Activated naive CD4-positive, alpha-beta T cell treated with anti-CD3 and anti-CD28 coated beads for 36 hours (primary cell): ENCODE measurements at regions of chr9 and their contacts with region 1.

Region 1: DNA sequence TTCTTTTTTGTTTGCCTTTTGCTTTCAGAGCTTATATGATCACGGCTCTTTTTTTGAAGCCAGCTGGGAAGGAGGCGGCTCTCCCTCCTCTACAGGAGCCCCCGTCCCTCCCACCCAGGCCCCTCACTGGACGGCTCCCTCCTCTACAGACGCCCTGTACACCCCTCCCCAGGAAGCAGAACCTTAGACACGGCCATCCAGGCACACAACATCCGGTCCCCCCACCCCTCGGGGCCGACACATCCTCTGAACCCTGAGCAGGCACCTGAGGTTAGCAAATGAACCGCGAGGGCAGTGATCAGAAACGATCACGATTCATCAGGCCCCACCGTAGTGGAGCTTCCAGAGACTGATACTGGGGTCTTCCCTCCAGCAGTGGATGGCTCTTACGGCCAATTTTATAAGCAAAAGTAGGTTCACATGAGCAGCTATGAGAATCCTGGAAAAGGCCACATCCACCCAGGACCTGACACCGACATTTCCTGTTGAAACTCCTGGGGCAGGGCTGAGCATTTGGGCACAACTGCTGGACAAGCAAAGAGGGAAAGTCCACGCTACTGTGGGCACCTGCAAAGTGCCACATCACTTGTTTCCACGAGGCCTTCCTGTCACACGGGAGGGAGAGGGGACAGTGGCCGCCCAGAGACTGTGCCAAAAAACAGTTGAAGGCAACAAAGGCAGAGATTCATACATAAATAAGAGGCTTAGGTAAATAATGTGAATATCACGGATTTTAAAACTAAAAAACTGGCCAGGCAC is 78.9 kb downstream of the SEMA4D start:
- DNase-seq: peak; percentile 82
- H3K4me3 Mint-ChIP-seq: peak overlapping the region; percentile 53
- H3K27ac Mint-ChIP-seq: peak overlapping the region; percentile 98
- H3K4me1 Mint-ChIP-seq: peaks cover 89% of the 10 kb centered on the region
- H3K27me3 Mint-ChIP-seq: no peaks in the 10 kb centered on the region

Region 2: DNA sequence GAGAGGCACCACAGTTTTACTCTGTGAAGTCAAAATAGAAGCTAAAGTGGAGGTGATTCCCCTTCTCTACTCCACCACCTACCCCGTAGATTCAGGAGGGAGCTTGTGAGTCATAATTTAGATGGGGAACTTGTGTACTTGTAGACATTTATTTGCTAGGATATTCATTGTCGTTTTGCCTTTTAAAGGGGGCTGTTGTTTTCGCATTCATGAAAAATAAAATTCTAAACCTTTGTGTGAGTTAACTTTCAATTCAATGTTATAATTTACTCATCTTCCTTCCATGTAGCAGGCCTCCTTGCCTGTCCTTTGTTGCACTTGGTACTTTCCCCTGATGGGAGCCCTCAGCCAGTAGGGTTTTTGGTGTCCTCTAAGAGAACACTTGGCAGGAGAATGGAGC is 78.7 kb before region 1 on chr9:
- CTCF ChIA-PET with region 1: no interaction called
- intact Hi-C with region 1: loop called (anchors 1 kb)
- DNase-seq: peak; percentile 31
- H3K4me3 Mint-ChIP-seq: no peak overlapping the region
- H3K27ac Mint-ChIP-seq: peak overlapping the region; percentile 67
- H3K4me1 Mint-ChIP-seq: peaks cover 48% of the 10 kb centered on the region
- H3K27me3 Mint-ChIP-seq: no peaks in the 10 kb centered on the region

Region 3: DNA sequence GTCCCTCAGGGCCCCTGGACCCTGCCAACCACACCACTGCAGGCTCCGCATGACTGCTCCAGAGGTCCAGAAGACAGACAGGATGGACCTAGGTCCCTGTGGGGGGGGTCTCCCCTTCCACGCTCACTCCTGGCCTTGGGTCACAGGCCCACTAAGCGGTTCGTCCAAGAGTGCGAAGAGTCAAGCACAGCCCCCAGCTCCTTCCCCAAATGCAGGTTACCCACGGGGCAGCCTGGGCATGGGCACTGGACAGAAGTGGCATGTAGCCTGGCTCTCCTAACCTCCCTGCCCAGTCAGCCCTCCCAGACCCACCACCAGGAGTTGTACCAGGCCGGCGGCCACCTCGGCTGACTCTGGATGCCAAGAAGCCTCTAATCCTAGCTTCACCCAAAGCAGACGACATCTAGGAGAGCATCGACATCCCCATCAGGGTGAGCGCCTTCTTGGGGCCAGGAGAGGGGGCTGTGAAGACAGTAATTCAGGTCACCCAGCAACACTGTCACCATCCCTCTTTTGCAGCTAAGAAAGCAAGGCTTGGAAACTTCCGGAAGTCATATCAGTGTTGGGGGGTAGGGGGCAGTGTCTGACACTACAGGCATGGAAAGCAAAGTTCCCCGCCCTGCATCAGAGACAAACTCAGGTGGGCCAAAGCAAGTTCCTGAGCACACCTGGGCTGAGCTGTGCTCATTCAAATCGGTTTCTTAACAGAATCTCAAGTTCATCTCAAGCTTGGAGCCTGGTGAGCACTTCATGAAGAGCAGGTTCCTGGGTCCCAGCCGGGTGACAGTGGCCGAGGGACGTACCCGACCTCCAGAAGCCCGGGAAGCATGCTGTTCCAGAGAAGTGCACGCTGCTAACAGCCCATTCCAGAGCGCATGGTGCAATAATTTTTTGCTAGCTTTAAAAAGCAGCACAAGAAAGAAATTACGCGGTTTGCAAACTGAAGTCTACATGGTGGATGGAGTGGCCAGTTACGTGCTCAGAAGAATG is 10.1 kb after region 1 on chr9:
- CTCF ChIA-PET with region 1: interaction called, 17 read pairs
- intact Hi-C with region 1: loop called (anchors 1 kb)
- DNase-seq: peak; percentile 79
- H3K4me3 Mint-ChIP-seq: no peak overlapping the region
- H3K27ac Mint-ChIP-seq: peak overlapping the region; percentile 98
- H3K4me1 Mint-ChIP-seq: peaks cover 90% of the 10 kb centered on the region
- H3K27me3 Mint-ChIP-seq: no peaks in the 10 kb centered on the region

Region 4: GRCh38 chr9:89455356-89455824 is 36.3 kb after region 1 on chr9:
- CTCF ChIA-PET with region 1: no interaction called
- intact Hi-C with region 1: loop called (anchors 2 kb)
- DNase-seq: peak; percentile 63
- H3K4me3 Mint-ChIP-seq: peak overlapping the region; percentile 1
- H3K27ac Mint-ChIP-seq: peak overlapping the region; percentile 79
- H3K4me1 Mint-ChIP-seq: peaks cover 91% of the 10 kb centered on the region
- H3K27me3 Mint-ChIP-seq: no peaks in the 10 kb centered on the region

Region 5: GRCh38 chr9:89497978-89498851 is 79.2 kb after region 1 on chr9 and contains the start of gene SEMA4D:
- CTCF ChIA-PET with region 1: interaction called, 4 read pairs
- intact Hi-C with region 1: loop called (anchors 2 kb)
- DNase-seq: peak; percentile 84
- H3K4me3 Mint-ChIP-seq: peak within 1 kb of the TSS; percentile 89
- H3K27ac Mint-ChIP-seq: peak within 1 kb of the TSS; percentile 93
- H3K4me1 Mint-ChIP-seq: peaks cover 73% of the 10 kb centered on the region
- H3K27me3 Mint-ChIP-seq: no peaks in the 10 kb centered on the region
- total RNA-seq, gene SEMA4D: 156 to 160 TPM

Region 6: GRCh38 chr9:89536145-89536574 is 117.1 kb after region 1 on chr9:
- CTCF ChIA-PET with region 1: interaction called, 3 read pairs
- intact Hi-C with region 1: loop called (anchors 1 kb)
- DNase-seq: peak; percentile 55
- H3K4me3 Mint-ChIP-seq: peak overlapping the region; percentile 44
- H3K27ac Mint-ChIP-seq: peak overlapping the region; percentile 86
- H3K4me1 Mint-ChIP-seq: peaks cover 88% of the 10 kb centered on the region
- H3K27me3 Mint-ChIP-seq: no peaks in the 10 kb centered on the region

Region 7: GRCh38 chr9:89701221-89701798 is 282.2 kb after region 1 on chr9:
- CTCF ChIA-PET with region 1: no interaction called
- intact Hi-C with region 1: loop called (anchors 5 kb)
- DNase-seq: peak; percentile 93
- H3K4me3 Mint-ChIP-seq: peak overlapping the region; percentile 50
- H3K27ac Mint-ChIP-seq: peak overlapping the region; percentile 85
- H3K4me1 Mint-ChIP-seq: peaks cover 30% of the 10 kb centered on the region
- H3K27me3 Mint-ChIP-seq: no peaks in the 10 kb centered on the region